AG04450 (cell line): ENCODE measurements at regions of chr5 and their contacts with region 1.

Region 1: GRCh38 chr5:151051066-151051930 is 29.5 kb downstream of the TNIP1 start:
- DNase-seq: peak; percentile 43
- H3K4me3 ChIP-seq: no peak overlapping the region
- H3K27ac ChIP-seq: no peak overlapping the region
- H3K27me3 ChIP-seq: no peaks in the 10 kb centered on the region
- CTCF ChIP-seq: peak; percentile 95

Region 2: GRCh38 chr5:151016700-151017099 is 34.6 kb before region 1 on chr5:
- CTCF ChIA-PET with region 1: interaction called, 12 read pairs
- POLR2A ChIA-PET with region 1: no interaction called
- DNase-seq: no peak
- H3K4me3 ChIP-seq: no peak overlapping the region
- H3K27ac ChIP-seq: no peak overlapping the region
- H3K27me3 ChIP-seq: peaks cover 12% of the 10 kb centered on the region
- CTCF ChIP-seq: no peak

Region 3: GRCh38 chr5:151068433-151069197 is 17.3 kb after region 1 on chr5:
- CTCF ChIA-PET with region 1: interaction called, 174 read pairs
- POLR2A ChIA-PET with region 1: no interaction called
- DNase-seq: no peak
- H3K4me3 ChIP-seq: no peak overlapping the region
- H3K27ac ChIP-seq: no peak overlapping the region
- H3K27me3 ChIP-seq: no peaks in the 10 kb centered on the region
- CTCF ChIP-seq: no peak

Region 4: GRCh38 chr5:151086905-151087360 is 35.6 kb after region 1 on chr5:
- CTCF ChIA-PET with region 1: interaction called, 19 read pairs
- POLR2A ChIA-PET with region 1: no interaction called
- DNase-seq: no peak
- H3K4me3 ChIP-seq: peak overlapping the region; percentile 31
- H3K27ac ChIP-seq: no peak overlapping the region
- H3K27me3 ChIP-seq: no peaks in the 10 kb centered on the region
- CTCF ChIP-seq: no peak

Region 5: DNA sequence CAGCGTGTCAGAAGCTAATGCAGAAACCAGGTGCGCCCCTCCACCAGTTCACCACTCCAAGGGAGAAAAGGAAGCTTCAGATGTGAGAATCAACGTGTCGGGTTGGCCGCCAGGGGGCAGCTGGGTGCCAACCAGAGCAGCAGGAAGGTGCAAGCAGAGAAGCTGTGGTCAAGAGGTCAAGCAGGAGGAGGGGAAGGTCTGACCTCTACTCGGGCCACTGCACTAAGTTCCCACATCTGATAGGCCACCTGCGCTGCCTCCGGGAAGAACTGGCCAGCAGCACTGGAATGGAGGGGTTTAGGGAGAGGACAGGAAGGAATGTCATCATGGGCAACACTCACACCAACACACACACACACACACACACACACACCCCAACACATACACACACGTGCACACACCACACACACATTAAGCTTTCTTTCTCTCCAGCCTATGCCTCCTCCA is 74.9 kb after region 1 on chr5:
- CTCF ChIA-PET with region 1: interaction called, 27 read pairs
- POLR2A ChIA-PET with region 1: no interaction called
- DNase-seq: no peak
- H3K4me3 ChIP-seq: no peak overlapping the region
- H3K27ac ChIP-seq: no peak overlapping the region
- H3K27me3 ChIP-seq: no peaks in the 10 kb centered on the region
- CTCF ChIP-seq: peak; percentile 69

Region 6: GRCh38 chr5:151157426-151158286 is 106.4 kb after region 1 on chr5 and contains the start of gene ANXA6:
- CTCF ChIA-PET with region 1: interaction called, 143 read pairs
- POLR2A ChIA-PET with region 1: no interaction called
- DNase-seq: peak; percentile 49
- H3K4me3 ChIP-seq: peak within 1 kb of the TSS; percentile 95
- H3K27ac ChIP-seq: peak within 1 kb of the TSS; percentile 72
- H3K27me3 ChIP-seq: no peaks in the 10 kb centered on the region
- CTCF ChIP-seq: no peak
- polyA plus RNA-seq, gene ANXA6: 502 and 538 TPM in 2 replicates